KBM-7 (cell line): ENCODE measurements at regions of chrX and their contacts with region 1.

Region 1: DNA sequence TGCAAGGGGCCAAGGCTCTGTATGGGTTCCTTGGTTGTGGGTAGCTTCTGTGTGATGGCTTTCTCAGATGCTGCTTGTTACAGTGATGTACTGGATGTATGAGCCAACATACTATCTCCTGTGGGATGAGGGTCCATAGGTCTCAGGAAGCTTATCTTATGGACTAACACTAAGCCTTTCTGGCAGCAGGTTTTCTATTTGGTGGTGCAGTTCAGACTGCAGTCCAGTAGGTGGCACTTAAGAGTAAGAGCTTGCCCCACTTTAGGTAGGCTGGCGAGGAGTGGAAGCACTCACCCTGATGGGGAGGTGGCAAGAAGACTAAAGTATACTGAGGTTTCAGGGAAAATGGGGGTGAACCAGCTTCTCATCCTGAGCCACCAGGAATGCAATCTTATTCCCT is 306.7 kb upstream of the MAOA start:
- DNase-seq: peak; percentile 65

Region 2: GRCh38 chrX:43176686-43177085 is 172.7 kb before region 1 on chrX:
- in situ Hi-C with region 1: no loop called
- DNase-seq: peak; percentile 47

Region 3: DNA sequence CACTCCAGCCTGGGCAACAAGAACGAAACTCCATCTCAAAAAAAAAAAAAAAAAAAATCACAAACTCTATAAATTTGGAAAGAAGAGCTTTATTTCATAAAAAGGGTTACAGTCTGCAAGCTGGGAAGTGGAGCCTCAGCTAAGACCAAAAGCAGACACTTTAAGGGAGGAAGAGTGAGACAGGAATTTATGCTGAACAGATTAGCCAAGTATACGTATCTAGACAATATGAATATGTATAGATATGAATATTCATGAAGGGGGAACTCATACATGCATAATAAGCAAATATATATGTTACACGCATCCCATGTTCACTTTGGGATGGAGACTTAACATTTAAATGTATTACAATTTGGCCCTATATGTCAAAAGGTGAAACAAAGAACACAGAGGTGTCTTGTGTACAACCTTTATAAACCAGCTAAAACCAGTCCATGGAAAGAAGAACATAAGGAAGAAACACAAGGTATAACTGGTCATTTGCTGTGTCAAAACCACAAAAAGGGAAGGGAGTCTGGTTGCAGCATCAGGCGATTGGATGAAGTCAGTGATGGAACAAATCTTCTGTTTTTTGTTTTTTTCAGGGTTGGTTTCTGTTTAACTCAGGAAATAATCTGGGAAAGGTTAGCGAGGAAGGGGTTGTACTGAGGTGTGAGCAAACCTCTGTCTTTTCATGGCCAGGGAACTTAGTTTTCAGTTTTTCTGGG is 176.7 kb after region 1 on chrX:
- in situ Hi-C with region 1: loop called (anchors 25 kb)
- DNase-seq: peak; percentile 64

Region 4: GRCh38 chrX:43693602-43694406 is 344.4 kb after region 1 on chrX:
- in situ Hi-C with region 1: no loop called
- DNase-seq: no peak

Region 5: DNA sequence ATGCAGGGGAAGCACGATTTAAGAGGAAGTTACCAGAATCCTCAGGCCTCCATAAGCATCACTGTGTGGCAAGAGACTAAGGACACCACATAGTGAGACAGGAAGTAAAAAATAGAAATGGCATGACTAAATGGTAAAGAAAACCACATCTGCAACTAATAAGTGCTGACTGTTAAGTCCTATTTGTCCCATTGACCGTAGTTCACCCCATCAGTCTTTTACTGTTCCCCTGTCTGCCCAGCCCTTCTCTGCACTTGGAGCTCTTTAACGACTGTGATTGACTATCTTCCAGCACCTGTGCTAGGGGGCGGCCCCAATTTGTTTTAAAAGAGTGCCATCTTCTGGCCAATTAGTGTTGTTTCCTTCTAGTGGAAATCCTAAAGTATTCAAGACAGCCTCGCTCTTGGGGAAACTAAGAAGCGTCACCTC is 400.9 kb after region 1 on chrX:
- in situ Hi-C with region 1: loop called (anchors 25 kb)
- DNase-seq: peak; percentile 79